Activated B cell treated with CpG ODN at 0.5 μM for 24 hours (primary cell): ENCODE measurements at regions of chr9 and their contacts with region 1.

Region 1: DNA sequence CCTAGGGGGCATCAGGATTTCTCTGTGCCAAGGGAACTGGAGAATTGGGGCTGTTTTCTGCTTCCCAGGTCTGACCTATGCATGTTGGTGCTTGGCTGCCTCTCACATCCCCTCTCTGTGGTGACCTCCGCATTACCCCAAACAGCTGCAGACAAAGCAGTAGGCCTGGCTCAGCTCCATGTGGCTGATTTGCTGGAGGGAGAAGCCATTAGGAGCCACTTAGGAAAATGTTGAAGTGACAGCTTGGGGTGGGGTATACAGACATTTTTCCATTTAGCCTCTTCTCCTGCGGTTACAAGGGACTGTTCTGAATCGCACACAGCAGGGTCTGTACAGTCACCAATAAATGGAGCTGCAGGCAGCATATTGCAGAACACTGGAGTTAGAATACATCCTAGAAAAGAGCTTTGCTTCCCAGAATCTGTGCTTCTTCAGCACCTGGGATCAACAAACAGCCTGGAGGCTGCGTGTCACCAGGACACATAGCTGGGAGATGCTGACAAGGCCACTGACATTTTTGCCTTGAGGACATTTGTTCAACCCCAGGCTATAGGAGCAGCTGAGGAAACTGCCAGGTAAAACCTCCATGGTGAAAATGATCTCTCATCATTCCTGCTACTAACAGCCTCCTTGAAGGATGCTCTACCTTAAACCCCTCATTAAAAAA is 335.3 kb downstream of the DIRAS2 start:
- DNase-seq: no peak
- ATAC-seq: no peak
- H3K4me3 Mint-ChIP-seq: no peak overlapping the region
- H3K27ac Mint-ChIP-seq: no peak overlapping the region
- H3K4me1 Mint-ChIP-seq: no peaks in the 10 kb centered on the region
- H3K27me3 Mint-ChIP-seq: peaks cover 12% of the 10 kb centered on the region
- CTCF ChIP-seq: no peak

Region 2: DNA sequence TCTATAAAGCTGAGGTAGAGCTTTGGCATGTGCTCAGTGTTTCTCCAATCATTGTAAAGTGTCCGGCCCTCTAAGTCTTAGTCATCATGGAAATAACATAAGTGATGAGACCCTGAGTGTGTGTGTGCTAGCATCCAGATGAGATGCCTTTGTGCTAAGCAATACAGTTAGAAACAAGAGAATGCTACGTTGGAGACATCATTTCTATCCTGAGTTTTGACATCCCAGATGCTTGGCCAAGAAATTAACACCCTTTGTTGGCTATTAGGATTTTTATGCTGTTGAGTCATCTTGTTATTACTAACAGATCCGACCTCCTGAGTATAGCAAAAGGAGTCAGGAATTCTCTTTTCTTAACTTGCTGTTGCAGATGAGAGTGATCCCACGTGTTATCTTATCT is 194.5 kb before region 1 on chr9:
- CTCF ChIA-PET with region 1: no interaction called
- POLR2A ChIA-PET with region 1: no interaction called
- intact Hi-C with region 1: no loop called
- DNase-seq: no peak
- ATAC-seq: no peak
- H3K4me3 Mint-ChIP-seq: no peak overlapping the region
- H3K27ac Mint-ChIP-seq: no peak overlapping the region
- H3K4me1 Mint-ChIP-seq: no peaks in the 10 kb centered on the region
- H3K27me3 Mint-ChIP-seq: peaks cover 7% of the 10 kb centered on the region
- CTCF ChIP-seq: no peak

Region 3: DNA sequence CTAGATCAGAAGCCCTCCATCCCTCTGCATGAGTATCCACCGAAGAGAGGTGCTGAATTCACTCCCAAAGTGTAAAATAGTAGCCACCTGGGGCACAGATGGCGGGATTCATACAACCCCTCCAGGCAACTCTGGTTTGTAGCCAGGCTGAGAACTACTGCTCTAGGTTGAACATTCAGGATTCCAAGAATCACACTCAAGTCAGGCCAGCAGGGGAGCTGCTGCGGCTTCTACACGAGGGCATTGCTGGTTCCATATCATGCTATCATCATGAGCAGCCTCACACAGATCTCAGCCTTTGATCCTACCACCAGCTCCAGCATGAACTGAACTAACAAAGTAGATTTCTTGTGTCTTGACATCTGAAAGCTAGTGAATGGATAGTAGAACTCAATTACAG is 32.6 kb before region 1 on chr9:
- CTCF ChIA-PET with region 1: no interaction called
- POLR2A ChIA-PET with region 1: no interaction called
- intact Hi-C with region 1: no loop called
- DNase-seq: no peak
- ATAC-seq: no peak
- H3K4me3 Mint-ChIP-seq: no peak overlapping the region
- H3K27ac Mint-ChIP-seq: no peak overlapping the region
- H3K4me1 Mint-ChIP-seq: no peaks in the 10 kb centered on the region
- H3K27me3 Mint-ChIP-seq: peaks cover 29% of the 10 kb centered on the region
- CTCF ChIP-seq: no peak

Region 4: DNA sequence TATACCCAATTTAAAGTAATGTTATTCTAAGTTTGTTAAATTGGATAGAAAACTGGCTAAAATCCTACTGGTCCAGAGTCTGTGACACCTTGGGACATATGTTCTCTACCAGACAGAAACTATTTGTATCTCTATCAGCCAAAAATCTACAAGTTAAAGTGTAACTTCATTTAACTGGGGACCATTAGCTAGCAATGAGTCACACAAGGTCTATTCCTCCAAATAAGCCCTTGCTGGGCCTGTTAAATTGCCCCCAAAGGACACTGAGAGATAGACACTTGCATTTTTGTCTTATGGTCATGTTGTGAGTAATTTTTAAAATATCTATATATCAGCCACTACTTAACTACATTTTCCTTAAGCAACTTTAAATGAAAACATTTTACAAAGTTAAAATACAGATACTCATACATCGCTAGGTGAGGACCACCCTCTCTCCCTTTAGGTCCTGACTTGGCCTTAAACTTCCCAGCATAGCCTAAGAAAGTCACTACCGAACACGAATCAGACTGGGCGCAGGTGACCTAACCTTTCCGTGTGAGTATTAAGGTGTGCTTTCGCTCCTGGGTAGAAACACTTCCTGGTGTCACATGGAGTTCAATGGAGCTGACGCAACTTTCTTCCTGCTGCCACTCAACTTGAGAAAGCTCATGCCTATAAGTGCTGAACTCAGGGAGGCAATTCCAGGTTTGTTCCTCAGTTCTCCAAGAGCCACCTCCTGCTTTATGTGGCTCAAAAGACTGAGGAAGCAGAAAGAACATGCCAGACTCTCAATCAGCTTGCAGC is 86.3 kb after region 1 on chr9:
- CTCF ChIA-PET with region 1: no interaction called
- POLR2A ChIA-PET with region 1: no interaction called
- intact Hi-C with region 1: no loop called
- DNase-seq: no peak
- ATAC-seq: no peak
- H3K4me3 Mint-ChIP-seq: no peak overlapping the region
- H3K27ac Mint-ChIP-seq: no peak overlapping the region
- H3K4me1 Mint-ChIP-seq: no peaks in the 10 kb centered on the region
- H3K27me3 Mint-ChIP-seq: peaks cover 9% of the 10 kb centered on the region
- CTCF ChIP-seq: no peak

Region 5: GRCh38 chr9:90734631-90735030 is 427.3 kb after region 1 on chr9:
- CTCF ChIA-PET with region 1: no interaction called
- POLR2A ChIA-PET with region 1: interaction called, 12 read pairs
- intact Hi-C with region 1: no loop called
- DNase-seq: no peak
- ATAC-seq: no peak
- H3K4me3 Mint-ChIP-seq: no peak overlapping the region
- H3K27ac Mint-ChIP-seq: no peak overlapping the region
- H3K4me1 Mint-ChIP-seq: no peaks in the 10 kb centered on the region
- H3K27me3 Mint-ChIP-seq: peaks cover 14% of the 10 kb centered on the region
- CTCF ChIP-seq: no peak